ENCODE measurements at regions of chr1 and their contacts with region 1.

Region 1: DNA sequence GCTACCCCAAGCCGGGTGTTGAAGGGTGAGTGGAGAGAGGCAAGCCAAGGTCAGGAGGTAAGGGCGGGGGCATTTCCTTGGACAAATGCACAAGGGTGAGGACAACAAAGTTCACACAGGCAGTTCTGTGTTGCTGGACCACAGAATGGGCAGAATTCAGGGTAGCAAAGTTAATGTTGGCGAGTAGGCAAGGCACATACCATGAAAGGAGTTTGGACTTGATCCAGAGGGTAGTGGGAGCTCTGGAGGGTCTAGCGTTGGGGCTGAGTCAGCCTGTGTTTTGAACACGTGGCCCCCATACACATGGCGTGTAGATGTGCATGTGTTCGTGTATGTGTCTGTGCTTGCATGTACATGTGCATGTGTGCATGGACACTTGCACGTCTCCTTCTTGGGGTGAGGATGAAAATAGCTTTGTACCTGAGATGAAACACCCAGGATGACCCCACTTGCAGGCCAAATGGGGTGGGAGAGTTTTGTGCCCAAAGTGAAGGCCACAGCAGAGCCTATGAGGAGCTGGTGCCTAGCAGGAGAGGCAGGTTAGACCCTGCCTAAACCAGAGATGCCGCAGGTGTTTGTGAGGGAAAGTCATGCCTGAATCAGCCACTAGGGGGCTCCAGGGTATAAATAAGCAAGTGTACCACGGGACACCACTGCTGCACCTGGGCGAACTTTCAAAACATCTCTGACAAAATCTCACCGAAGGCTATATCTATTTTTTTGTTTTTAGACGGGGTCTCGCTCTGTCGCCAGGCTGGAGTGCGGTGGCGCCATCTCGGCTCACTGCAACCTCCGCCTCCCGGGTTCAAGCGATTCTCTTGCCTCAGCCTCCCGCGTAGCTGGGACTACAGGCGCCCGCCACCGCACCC is 21.8 kb downstream of the SLC27A3 start:
- DNase-seq: peak; percentile 88
- H3K4me3 Mint-ChIP-seq: no peak overlapping the region
- H3K27ac Mint-ChIP-seq: no peak overlapping the region
- H3K4me1 Mint-ChIP-seq: peaks cover 15% of the 10 kb centered on the region
- H3K27me3 Mint-ChIP-seq: no peaks in the 10 kb centered on the region
- CTCF ChIP-seq: peak; percentile 93

Region 2: DNA sequence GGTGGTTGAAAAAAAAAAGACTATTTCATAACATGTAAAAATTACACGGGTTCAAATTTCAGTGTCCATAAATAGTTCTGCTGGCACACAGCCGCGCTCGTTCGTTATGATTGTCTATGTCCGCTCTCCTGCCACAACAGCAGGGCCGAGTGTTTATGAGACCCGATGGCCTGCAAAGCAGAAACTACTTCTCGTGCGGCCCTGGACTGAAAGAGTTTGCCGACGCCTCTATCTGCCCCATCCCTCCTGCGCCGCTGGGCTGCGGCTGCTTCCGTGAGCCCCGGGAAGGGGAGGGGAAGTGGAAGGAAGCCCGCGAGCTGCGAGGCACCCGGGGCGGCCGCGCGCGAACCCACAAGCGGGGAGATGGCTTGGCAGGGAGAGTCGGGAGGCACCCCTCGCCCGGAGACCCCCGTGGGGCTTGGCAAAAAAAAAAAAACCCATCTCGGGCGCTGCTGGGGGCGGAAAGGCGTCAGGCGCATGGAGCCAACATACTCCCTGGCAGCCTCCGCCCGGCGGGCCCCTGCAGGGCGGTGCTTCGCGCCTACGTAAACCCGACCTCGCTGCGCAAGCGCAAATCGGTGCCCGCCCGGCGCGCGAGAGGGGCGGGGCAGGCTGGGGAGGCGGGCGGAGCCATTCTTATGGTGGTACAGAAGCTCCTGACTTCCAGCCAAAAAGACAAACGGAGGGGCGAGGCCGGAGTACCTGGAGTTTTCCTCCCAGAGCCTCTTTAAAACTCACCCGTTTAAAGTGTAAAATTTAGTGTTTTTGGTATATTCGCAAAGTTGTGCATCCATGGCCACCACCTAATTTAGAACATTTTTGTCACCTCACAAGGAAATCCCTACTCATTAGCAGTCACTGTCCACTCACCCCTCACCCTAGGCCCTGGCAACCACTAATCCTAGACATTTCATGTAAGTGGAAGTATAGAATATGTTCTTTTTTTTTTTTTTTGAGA is 13.5 kb before region 1 on chr1:
- CTCF ChIA-PET with region 1: interaction called, 11 read pairs
- POLR2A ChIA-PET with region 1: interaction called, 14 read pairs
- intact Hi-C with region 1: no loop called
- DNase-seq: peak; percentile 92
- H3K4me3 Mint-ChIP-seq: peak overlapping the region; percentile 94
- H3K27ac Mint-ChIP-seq: peak overlapping the region; percentile 84
- H3K4me1 Mint-ChIP-seq: peaks cover 4% of the 10 kb centered on the region
- H3K27me3 Mint-ChIP-seq: peaks cover 13% of the 10 kb centered on the region
- CTCF ChIP-seq: no peak

Region 3: GRCh38 chr1:153936011-153936802 is 139.2 kb after region 1 on chr1:
- CTCF ChIA-PET with region 1: interaction called, 11 read pairs
- POLR2A ChIA-PET with region 1: no interaction called
- intact Hi-C with region 1: no loop called
- DNase-seq: no peak
- H3K4me3 Mint-ChIP-seq: no peak overlapping the region
- H3K27ac Mint-ChIP-seq: no peak overlapping the region
- H3K4me1 Mint-ChIP-seq: no peaks in the 10 kb centered on the region
- H3K27me3 Mint-ChIP-seq: no peaks in the 10 kb centered on the region
- CTCF ChIP-seq: no peak

Region 4: DNA sequence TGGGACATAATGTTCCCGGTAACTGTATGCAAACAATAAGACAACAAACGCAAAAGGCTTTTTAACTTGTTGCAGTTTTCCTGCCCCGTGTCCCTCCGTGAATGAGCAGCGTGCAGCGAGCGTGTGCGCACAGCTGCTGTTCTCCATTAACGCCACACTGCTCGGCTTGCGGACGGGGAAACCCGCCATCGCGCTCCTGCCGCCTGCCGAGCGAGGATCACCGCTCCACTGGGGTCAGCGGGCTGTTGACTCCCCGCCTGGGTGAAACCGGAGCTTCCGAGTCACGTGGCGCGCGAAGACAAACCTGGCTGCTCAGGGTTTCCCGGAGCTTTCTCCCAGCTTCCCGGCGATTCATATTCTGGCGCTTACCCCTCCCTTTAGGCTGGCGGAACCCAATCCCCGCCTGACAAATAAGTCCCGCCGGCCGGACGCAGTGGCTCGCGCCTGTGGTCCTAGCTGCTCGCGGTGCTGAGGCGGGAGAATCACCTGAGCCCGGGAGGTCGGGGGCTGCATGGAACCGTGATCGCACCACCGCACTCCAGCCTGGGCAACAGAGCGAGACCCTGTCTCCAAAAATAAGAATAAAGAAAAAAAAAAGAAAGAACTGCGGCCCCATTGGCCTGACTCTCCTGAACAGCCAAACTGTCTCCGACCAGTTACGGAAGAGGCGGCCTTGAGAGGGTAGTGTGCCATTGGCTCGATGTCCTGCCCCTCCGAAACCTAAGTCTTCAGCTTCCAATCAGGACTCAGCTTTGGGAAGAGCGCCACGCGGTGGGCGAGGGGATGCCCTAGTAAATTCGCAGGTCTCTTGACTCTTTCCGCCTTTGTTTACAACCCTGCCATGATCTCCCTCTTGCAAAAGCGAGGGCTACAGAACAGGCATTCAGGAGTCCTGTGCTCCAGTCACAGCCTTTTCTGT is 170.3 kb after region 1 on chr1 and contains the start of gene CREB3L4:
- CTCF ChIA-PET with region 1: interaction called, 20 read pairs
- POLR2A ChIA-PET with region 1: interaction called, 13 read pairs
- intact Hi-C with region 1: no loop called
- DNase-seq: peak; percentile 100
- H3K4me3 Mint-ChIP-seq: peak within 1 kb of the TSS; percentile 95
- H3K27ac Mint-ChIP-seq: peak within 1 kb of the TSS; percentile 94
- H3K4me1 Mint-ChIP-seq: peaks cover 40% of the 10 kb centered on the region
- H3K27me3 Mint-ChIP-seq: no peaks in the 10 kb centered on the region
- CTCF ChIP-seq: peak; percentile 32
- total RNA-seq, gene CREB3L4: 14.7 and 17.6 TPM in 2 replicates

Region 5: DNA sequence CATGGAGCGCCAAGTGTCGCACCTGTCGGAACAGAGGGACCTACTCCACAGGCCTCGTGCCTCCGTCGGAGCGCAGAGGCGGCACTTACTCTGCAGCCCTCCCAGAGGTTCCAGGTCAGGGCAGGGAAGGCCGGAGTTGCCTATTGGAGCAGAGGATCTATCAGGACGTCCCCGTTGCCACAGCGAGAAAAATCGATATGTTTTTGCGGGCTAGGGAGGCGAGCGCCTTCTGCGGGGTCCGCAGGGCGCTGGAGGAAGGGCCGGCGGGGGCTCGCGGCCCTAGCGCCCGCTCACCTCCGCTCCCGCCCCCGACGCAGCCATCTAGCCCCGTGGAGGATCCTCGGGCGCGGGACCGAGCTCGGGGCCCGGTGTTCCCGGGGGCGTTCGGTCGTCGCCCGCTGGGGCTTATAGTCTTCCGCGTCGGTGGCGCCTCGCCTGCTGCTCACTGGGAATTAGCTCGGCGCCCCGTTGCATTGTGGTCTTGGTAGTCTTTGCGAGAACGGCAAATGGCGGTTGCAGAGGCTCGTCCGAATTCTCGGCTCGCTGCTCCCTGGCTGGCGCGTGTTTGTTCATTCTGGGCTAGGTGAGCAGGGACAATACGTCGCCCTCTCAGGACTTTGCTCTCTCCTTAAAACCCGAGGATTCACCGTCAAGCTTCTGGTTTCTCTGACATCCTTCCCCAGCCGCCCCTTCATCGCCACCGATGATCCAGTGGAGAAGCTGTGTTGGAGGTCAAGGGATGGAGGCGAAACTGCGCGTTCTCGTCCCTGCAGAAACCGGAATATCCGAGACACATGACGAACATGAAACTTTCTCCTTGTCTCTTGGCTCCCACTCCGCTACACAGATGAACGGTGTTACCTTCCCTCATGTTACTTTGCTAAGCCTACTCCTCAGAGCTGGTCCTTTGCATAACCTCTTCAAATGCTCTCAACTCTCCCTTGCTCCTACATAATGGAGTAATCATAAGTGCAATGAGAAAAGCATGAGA is 180.5 kb after region 1 on chr1 and contains the start of gene JTB:
- CTCF ChIA-PET with region 1: interaction called, 10 read pairs
- POLR2A ChIA-PET with region 1: interaction called, 6 read pairs
- intact Hi-C with region 1: no loop called
- DNase-seq: peak; percentile 93
- H3K4me3 Mint-ChIP-seq: peak within 1 kb of the TSS; percentile 98
- H3K27ac Mint-ChIP-seq: peak within 1 kb of the TSS; percentile 96
- H3K4me1 Mint-ChIP-seq: peaks cover 23% of the 10 kb centered on the region
- H3K27me3 Mint-ChIP-seq: no peaks in the 10 kb centered on the region
- CTCF ChIP-seq: no peak
- total RNA-seq, gene JTB: 194 and 224 TPM in 2 replicates

Region 6: DNA sequence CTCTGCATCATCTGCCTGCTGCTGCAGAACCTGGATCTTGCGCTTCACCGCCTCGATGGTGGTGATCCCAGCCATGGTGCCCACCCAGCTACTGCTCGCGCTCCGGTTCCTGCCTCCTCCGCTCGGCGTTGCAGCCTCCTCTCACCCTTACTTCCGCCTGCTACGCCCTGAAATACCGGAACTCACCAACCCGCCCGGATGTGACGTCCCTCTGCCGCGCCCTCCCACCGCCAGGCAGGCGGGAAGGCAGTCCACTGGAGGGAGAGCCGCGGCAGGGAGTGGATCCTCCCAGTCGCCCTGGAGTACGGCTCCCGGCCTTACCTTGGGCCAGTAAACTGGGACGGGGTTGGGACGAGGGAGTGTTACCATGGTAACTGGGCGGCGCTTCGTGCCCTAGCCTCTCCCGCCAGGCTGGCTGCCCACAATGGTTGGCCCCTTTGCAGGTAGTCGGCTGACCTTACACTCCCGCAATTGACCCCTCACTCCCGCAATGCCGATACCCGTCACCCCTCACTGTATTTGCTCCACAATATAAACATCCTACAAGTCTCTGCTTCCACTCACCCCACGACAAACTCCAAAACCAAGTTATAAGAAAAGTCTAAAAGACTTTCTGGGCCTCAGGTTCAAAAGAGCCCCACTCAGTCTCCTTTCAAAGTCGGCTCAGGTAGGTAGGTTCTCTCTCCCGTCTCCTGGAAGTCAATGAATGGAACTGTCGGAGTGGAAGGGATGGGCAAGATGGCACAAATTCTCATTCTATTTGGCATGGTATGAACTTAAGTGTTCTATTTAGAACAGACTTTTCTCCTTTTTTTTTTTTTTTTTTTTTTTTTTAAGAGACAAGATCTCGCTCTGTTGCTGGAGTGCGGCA is 386.3 kb after region 1 on chr1:
- CTCF ChIA-PET with region 1: no interaction called
- POLR2A ChIA-PET with region 1: no interaction called
- intact Hi-C with region 1: loop called (anchors 10 kb)
- DNase-seq: peak; percentile 99
- H3K4me3 Mint-ChIP-seq: peak overlapping the region; percentile 92
- H3K27ac Mint-ChIP-seq: peak overlapping the region; percentile 96
- H3K4me1 Mint-ChIP-seq: peaks cover 27% of the 10 kb centered on the region
- H3K27me3 Mint-ChIP-seq: no peaks in the 10 kb centered on the region
- CTCF ChIP-seq: no peak

Measured in MCF 10A (cell line).